ENCODE measurements at regions of chr7 and their contacts with region 1.

Region 1: GRCh38 chr7:47622946-47623640 is 41.2 kb upstream of the TNS3 start:
- DNase-seq: peak; percentile 56 to 79
- H3K4me3 ChIP-seq: no peak overlapping the region
- H3K4me3 Mint-ChIP-seq: peak overlapping the region; percentile 16
- H3K27ac Mint-ChIP-seq: peak overlapping the region; percentile 77
- H3K4me1 ChIP-seq: peaks cover 57% of the 10 kb centered on the region
- H3K4me1 Mint-ChIP-seq: peaks cover 37% of the 10 kb centered on the region
- H3K27me3 ChIP-seq: no peaks in the 10 kb centered on the region
- H3K27me3 Mint-ChIP-seq: no peaks in the 10 kb centered on the region
- CTCF ChIP-seq: no peak

Region 2: GRCh38 chr7:47342296-47343060 is 280.6 kb before region 1 on chr7:
- CTCF ChIA-PET with region 1: no interaction called
- POLR2A ChIA-PET with region 1: no interaction called
- intact Hi-C with region 1: no loop called
- DNase-seq: no peak
- H3K4me3 ChIP-seq: no peak overlapping the region
- H3K4me3 Mint-ChIP-seq: no peak overlapping the region
- H3K27ac Mint-ChIP-seq: no peak overlapping the region
- H3K4me1 ChIP-seq: no peaks in the 10 kb centered on the region
- H3K4me1 Mint-ChIP-seq: peaks cover 5% of the 10 kb centered on the region
- H3K27me3 ChIP-seq: no peaks in the 10 kb centered on the region
- H3K27me3 Mint-ChIP-seq: no peaks in the 10 kb centered on the region
- CTCF ChIP-seq: no peak

Region 3: DNA sequence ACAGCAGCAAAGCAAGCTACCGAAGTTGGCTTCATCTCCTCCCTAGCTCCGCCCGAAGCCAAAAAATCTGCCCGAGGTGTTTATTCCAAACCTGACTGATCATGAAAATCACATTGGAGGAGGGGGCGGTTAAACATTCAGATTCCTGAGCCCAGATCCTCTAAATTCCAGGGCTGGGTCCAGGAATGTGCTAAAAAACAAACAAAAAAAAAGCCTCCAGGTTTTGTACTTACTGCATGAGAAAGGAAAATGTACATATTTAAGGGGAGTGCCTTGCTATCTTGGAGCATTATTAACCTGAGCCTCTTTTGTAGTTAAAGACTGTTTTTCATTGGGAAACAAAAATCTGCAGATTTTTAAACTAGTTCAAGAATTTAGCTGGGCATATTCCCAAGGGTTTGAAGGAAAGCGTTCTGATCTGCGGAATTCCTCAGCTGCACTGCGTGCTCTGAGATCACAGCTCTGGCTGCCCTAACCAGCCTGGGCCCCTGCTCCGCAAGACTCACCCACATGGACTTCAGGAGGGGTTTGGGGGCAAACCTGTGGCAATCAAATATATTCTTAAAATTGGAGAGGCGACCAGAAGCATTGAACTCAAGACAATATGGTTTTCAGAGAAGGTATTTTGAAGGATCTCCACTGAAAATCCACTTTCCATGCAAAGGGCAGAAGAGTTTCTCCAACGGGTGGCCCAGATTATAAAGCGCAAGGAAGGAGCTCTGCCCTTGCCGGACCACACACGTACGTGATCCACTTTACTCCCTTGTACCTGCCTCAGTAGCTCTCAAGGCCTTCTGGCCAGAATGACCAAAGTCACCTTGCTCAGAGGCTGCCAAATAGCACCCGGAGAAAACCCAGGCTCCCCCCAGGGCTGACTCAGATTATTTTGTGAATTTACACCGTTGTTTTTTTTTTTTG is 31.2 kb before region 1 on chr7:
- CTCF ChIA-PET with region 1: no interaction called
- POLR2A ChIA-PET with region 1: no interaction called
- intact Hi-C with region 1: loop called (anchors 1 kb)
- DNase-seq: peak; percentile 87 to 92
- H3K4me3 ChIP-seq: 0 out of 2 replicates have a peak overlapping the region, but pooled peaks have one; percentile 9
- H3K4me3 Mint-ChIP-seq: peak overlapping the region; percentile 65
- H3K27ac Mint-ChIP-seq: peak overlapping the region; percentile 86
- H3K4me1 ChIP-seq: peaks cover 64% of the 10 kb centered on the region
- H3K4me1 Mint-ChIP-seq: peaks cover 41% of the 10 kb centered on the region
- H3K27me3 ChIP-seq: no peaks in the 10 kb centered on the region
- H3K27me3 Mint-ChIP-seq: no peaks in the 10 kb centered on the region
- CTCF ChIP-seq: no peak